Activated CD4-positive, alpha-beta memory T cell treated with anti-CD3 and anti-CD28 coated beads, Interleukin-2, amount 10 ng/mL, durations not matched to agents 7 days and 5 days (primary cell): ENCODE measurements at regions of chr7 and their contacts with region 1.

Region 1: DNA sequence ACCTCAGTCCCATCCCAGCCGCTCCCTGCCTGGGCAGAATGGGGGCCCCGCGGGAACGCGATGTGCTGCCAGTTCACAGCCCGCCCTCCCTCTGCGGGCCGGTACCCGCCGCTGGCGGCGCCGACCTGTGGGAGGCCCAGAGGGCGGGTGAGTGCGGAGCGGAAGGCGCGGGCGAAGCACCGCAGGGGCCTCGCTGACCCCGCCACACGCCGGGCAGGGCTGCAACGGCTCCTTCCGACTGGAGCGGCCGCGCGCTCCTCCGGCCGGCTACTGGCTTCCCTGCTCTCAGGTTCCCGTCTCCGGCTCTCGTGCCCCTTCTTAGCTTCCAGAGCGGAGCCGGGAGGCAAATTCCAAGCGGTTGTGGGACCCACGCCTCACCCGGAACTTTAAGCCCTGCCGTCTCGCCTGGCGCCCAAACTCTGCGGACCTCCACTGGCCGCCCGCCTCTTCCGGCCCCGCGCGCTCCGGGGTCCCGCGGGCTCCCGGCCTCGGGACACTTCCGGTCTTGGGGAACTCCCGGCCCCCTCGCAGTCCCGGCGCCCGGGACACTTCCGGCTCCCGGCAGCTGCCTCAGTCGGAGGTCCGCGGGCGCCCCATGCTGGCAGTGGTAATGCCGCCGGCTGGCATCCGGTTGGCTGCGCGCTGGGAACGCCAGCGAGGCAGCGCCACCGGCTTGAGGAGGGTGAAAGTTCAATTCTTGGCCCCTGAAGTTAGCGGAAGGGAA is at the start of gene CYREN:
- DNase-seq: peak; percentile 90
- H3K4me3 Mint-ChIP-seq: peak within 1 kb of the TSS; percentile 87
- H3K27ac Mint-ChIP-seq: peak within 1 kb of the TSS; percentile 93
- H3K4me1 Mint-ChIP-seq: peaks cover 51% of the 10 kb centered on the region
- H3K27me3 Mint-ChIP-seq: no peaks in the 10 kb centered on the region
- total RNA-seq, gene CYREN: 32.0 to 32.1 TPM

Region 2: GRCh38 chr7:134986363-134987251 is 183.8 kb before region 1 on chr7 and contains the start of gene AGBL3:
- CTCF ChIA-PET with region 1: interaction called, 58 read pairs
- POLR2A ChIA-PET with region 1: interaction called, 19 read pairs
- DNase-seq: peak; percentile 94
- H3K4me3 Mint-ChIP-seq: peak within 1 kb of the TSS; percentile 98
- H3K27ac Mint-ChIP-seq: peak within 1 kb of the TSS; percentile 90
- H3K4me1 Mint-ChIP-seq: peaks cover 34% of the 10 kb centered on the region
- H3K27me3 Mint-ChIP-seq: no peaks in the 10 kb centered on the region
- total RNA-seq, gene AGBL3: 2.8 to 3.4 TPM

Region 3: GRCh38 chr7:135023622-135024021 is 146.8 kb before region 1 on chr7:
- CTCF ChIA-PET with region 1: no interaction called
- POLR2A ChIA-PET with region 1: no interaction called
- DNase-seq: no peak
- H3K4me3 Mint-ChIP-seq: no peak overlapping the region
- H3K27ac Mint-ChIP-seq: no peak overlapping the region
- H3K4me1 Mint-ChIP-seq: no peaks in the 10 kb centered on the region
- H3K27me3 Mint-ChIP-seq: no peaks in the 10 kb centered on the region

Region 4: DNA sequence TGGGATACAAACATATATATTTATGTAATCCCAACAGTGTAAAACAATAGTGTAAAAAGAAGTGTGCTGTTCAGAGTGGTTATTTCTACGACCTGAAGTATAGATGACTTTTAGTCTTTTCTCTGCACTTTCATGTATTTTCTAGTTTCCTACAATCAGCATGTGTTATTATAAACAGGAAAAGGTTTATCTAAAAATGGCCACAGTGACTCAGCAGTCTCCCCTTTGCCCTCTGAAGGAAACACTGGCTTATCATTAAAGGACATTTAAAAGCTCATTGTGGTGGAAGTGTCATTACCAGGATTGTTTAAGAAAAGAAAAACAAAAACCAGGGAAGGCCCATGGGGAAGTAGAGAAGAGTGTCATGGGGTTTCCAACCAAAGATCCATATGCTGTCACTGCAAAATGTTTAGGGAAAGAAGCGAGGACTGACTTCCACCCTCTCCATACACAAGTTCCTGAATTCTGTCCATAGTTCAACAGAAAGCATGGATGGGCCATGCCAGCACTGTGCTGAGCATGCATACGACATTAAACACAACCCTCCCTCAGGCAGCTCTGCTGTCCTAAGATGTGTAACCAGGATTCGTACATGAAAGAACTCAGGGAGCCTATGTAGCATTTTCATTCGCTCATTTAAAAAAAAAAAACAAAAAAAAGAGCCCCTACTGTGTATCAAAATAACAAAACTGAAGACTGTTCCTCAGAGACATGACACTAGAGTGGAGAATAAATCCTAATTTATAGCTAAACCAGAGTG is 10.2 kb before region 1 on chr7:
- CTCF ChIA-PET with region 1: interaction called, 31 read pairs
- POLR2A ChIA-PET with region 1: interaction called, 53 read pairs
- DNase-seq: peak; percentile 18
- H3K4me3 Mint-ChIP-seq: peak overlapping the region; percentile 33
- H3K27ac Mint-ChIP-seq: peak overlapping the region; percentile 83
- H3K4me1 Mint-ChIP-seq: peaks cover 54% of the 10 kb centered on the region
- H3K27me3 Mint-ChIP-seq: no peaks in the 10 kb centered on the region

Region 5: DNA sequence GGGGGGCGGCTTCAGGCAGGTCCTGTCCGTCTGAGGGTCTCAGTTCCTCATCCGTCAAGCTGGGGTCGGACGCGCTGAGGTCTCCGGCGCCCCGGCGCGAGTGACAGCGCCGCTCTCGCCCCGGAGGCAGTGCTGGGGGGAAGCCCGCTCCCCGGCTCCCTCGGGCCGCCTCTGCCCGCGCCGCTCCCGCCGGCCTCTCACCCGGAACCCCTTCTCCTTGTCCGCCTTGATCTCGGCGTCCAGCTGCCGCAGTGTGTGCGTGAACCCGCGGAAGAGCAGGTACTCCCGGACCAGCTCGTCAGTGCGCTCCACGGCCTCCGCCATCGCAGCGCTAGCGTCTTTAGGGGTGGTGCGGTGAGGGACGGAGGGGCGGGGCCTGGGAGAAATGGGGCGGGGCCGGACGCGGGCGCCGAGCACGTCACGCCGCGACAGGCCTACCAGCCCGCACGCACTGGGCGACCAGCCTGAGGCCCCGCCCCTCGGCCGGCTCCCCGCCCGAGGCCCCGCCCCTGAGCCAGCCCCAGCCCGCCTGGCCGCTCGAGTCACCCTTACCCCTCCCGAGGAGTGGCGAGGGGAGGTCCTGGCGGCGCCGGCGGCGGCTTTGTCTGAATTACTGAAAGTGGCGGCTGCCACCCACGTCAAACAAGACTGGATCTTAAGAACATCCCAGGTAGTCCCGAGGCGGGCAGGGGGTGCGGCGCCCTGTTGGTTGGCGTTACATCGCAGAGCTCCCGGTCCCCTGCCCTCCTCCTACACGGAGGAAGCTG is 40.9 kb after region 1 on chr7 and contains the start of gene WDR91:
- CTCF ChIA-PET with region 1: interaction called, 25 read pairs
- POLR2A ChIA-PET with region 1: interaction called, 26 read pairs
- DNase-seq: peak; percentile 97
- H3K4me3 Mint-ChIP-seq: peak within 1 kb of the TSS; percentile 94
- H3K27ac Mint-ChIP-seq: peak within 1 kb of the TSS; percentile 91
- H3K4me1 Mint-ChIP-seq: peaks cover 30% of the 10 kb centered on the region
- H3K27me3 Mint-ChIP-seq: no peaks in the 10 kb centered on the region
- total RNA-seq, gene WDR91: 10.7 to 11.6 TPM